ENCODE measurements at regions of chr4 and their contacts with region 1.

Region 1: DNA sequence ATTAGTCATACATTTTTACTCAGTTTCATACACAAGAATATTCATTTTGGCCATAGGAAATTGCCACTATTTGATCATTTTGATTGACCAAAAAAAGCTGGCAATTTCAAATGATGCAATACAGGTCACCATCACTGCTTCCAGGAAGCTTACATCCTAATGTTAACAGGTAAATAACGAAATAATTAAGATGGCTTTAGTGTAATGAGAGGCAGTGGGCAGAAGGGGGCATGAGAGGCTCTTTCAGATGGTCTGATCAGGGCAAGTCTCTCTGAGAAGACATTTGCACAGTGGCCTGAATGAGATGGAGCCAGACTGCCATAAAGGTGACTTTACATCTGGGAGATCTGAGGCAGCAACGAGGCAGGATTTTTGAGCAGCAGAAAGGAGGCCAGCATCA is 170.7 kb downstream of the SLIT2 start:
- DNase-seq: no peak
- ATAC-seq: peak in 2 of 4 donors; percentile 60 to 64
- H3K4me3 ChIP-seq: no peak overlapping the region
- H3K27ac ChIP-seq: no peak overlapping the region
- H3K4me1 ChIP-seq: no peaks in the 10 kb centered on the region
- H3K27me3 ChIP-seq: no peaks in the 10 kb centered on the region
- CTCF ChIP-seq: peak; percentile 40

Region 2: GRCh38 chr4:20313237-20314030 is 109.0 kb before region 1 on chr4:
- intact Hi-C with region 1: loop called in 1 of 2 experiments (anchors 10 kb)
- DNase-seq: peak in 1 of 2 donors; percentile 16
- ATAC-seq: no peak
- H3K4me3 ChIP-seq: no peak overlapping the region
- H3K27ac ChIP-seq: no peak overlapping the region
- H3K4me1 ChIP-seq: no peaks in the 10 kb centered on the region
- H3K27me3 ChIP-seq: no peaks in the 10 kb centered on the region
- CTCF ChIP-seq: no peak

Region 3: GRCh38 chr4:20354120-20354519 is 68.3 kb before region 1 on chr4:
- intact Hi-C with region 1: no loop called
- DNase-seq: no peak
- ATAC-seq: no peak
- H3K4me3 ChIP-seq: no peak overlapping the region
- H3K27ac ChIP-seq: no peak overlapping the region
- H3K4me1 ChIP-seq: no peaks in the 10 kb centered on the region
- H3K27me3 ChIP-seq: peaks cover 0 to 3% (median 0%) of the 10 kb centered on the region in 3 donors
- CTCF ChIP-seq: no peak

Region 4: DNA sequence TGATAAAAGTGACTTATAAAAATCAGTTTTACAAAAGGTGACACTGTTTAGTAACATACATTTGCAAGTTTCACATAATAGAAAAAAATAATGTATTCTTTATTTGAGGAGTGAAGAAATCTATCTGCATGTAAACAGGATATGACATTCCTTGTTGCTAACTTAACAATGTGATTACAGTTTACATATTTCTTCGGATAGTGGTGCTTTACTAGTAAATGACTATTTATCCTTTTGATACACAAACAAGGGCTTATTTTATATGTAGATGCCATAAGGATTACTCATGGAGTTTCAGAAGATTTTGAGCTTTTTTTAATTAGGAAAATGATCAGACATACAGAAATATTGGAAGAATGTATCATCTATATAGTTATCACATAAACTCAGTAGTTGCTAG is 44.2 kb before region 1 on chr4:
- intact Hi-C with region 1: no loop called
- DNase-seq: no peak
- ATAC-seq: no peak
- H3K4me3 ChIP-seq: no peak overlapping the region
- H3K27ac ChIP-seq: no peak overlapping the region
- H3K4me1 ChIP-seq: no peaks in the 10 kb centered on the region
- H3K27me3 ChIP-seq: no peaks in the 10 kb centered on the region
- CTCF ChIP-seq: no peak

Region 5: GRCh38 chr4:20445933-20446723 is 23.7 kb after region 1 on chr4:
- intact Hi-C with region 1: no loop called
- DNase-seq: no peak
- ATAC-seq: no peak
- H3K4me3 ChIP-seq: no peak overlapping the region
- H3K27ac ChIP-seq: no peak overlapping the region
- H3K4me1 ChIP-seq: no peaks in the 10 kb centered on the region
- H3K27me3 ChIP-seq: no peaks in the 10 kb centered on the region
- CTCF ChIP-seq: no peak

Region 6: GRCh38 chr4:20456407-20456806 is 34.0 kb after region 1 on chr4:
- intact Hi-C with region 1: no loop called
- DNase-seq: no peak
- ATAC-seq: no peak
- H3K4me3 ChIP-seq: no peak overlapping the region
- H3K27ac ChIP-seq: no peak overlapping the region
- H3K4me1 ChIP-seq: no peaks in the 10 kb centered on the region
- H3K27me3 ChIP-seq: no peaks in the 10 kb centered on the region
- CTCF ChIP-seq: no peak

Region 7: DNA sequence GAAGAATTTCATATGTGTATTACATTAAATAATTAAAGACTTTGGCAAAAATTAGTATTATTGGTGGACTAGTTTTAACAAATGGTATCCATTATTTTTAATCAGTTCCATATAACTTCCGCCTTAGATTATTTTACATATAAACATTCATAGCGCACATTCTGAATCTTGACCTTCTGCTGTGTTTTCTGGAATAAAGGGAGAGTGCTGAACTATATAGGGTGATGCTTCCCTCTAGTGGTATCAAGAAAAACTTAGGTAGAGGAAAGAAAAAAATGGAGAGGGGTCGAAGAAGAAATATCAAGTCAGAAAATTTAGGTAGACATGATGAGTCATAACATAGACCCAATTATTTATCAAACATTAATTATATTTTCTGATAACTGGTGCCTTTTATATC is 122.2 kb after region 1 on chr4:
- intact Hi-C with region 1: loop called in 1 of 2 experiments (anchors 10 kb)
- DNase-seq: no peak
- ATAC-seq: peak in 2 of 4 donors; percentile 48 to 53
- H3K4me3 ChIP-seq: no peak overlapping the region
- H3K27ac ChIP-seq: no peak overlapping the region
- H3K4me1 ChIP-seq: no peaks in the 10 kb centered on the region
- H3K27me3 ChIP-seq: no peaks in the 10 kb centered on the region
- CTCF ChIP-seq: peak; percentile 45

Region 8: DNA sequence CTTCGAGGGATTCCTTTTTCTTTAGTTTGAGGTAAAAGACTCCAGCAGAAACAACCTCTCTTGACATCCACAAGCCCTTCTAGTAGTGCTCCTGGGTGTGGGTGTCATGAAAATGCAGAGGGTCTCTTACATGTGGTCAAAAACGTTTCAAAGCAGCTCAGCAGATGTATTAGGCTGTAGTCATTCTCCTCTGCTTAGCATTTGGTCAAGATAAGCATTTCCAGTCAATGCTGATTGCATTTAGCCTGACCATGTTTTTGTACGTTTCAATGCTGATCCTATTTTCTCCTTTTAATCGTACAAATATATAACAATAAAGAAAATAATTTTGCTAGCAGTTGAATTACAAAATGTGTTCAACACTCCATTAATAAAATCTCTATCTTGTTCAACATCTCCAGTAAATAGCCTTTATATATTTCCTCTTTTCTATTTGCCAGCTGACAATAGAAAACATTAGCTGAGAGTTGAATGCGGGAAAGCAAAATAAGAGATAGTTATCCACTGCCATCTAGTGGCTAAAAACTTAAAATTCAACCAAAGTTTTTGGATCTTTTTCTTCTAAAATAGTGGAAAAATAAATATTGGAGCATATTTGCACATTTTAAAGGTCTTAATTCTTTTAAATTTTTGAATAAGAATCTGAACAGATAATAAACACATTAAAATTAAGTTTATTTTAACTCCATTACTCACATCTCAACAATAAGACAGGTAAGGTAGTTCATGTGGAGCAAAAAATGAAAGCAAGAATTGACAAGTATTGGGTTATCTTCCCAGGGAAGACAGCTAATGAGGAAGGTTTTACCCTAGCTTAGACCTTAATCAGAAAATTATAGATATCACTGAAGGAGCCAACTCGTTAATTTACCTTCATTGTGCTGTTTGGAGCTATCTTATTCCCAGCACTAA is 262.7 kb after region 1 on chr4:
- intact Hi-C with region 1: loop called (anchors 2 to 10 kb)
- DNase-seq: no peak
- ATAC-seq: no peak
- H3K4me3 ChIP-seq: no peak overlapping the region
- H3K27ac ChIP-seq: no peak overlapping the region
- H3K4me1 ChIP-seq: no peaks in the 10 kb centered on the region
- H3K27me3 ChIP-seq: peaks cover 0 to 4% (median 0%) of the 10 kb centered on the region in 3 donors
- CTCF ChIP-seq: peak; percentile 68